T-cell (primary cell): ENCODE measurements at regions of chr11 and their contacts with region 1.

Region 1: GRCh38 chr11:83000377-83000776 is 71.3 kb downstream of the RAB30 start:
- DNase-seq: no peak
- ATAC-seq: no peak
- H3K4me3 ChIP-seq: no peak overlapping the region
- H3K4me3 Mint-ChIP-seq: no peak overlapping the region
- H3K27ac ChIP-seq: no peak overlapping the region
- H3K27ac Mint-ChIP-seq: no peak overlapping the region
- H3K4me1 ChIP-seq: peaks cover 4 to 8% of the 10 kb centered on the region in 2 experiments
- H3K4me1 Mint-ChIP-seq: peaks cover 30 to 55% (median 45%) of the 10 kb centered on the region in 3 donors
- H3K27me3 ChIP-seq: no peaks in the 10 kb centered on the region
- H3K27me3 Mint-ChIP-seq: no peaks in the 10 kb centered on the region

Region 2: GRCh38 chr11:82714346-82715174 is 285.8 kb before region 1 on chr11:
- CTCF ChIA-PET with region 1: no interaction called
- POLR2A ChIA-PET with region 1: no interaction called
- DNase-seq: no peak
- ATAC-seq: no peak
- H3K4me3 ChIP-seq: no peak overlapping the region
- H3K4me3 Mint-ChIP-seq: no peak overlapping the region
- H3K27ac ChIP-seq: no peak overlapping the region
- H3K27ac Mint-ChIP-seq: no peak overlapping the region
- H3K4me1 ChIP-seq: no peaks in the 10 kb centered on the region
- H3K4me1 Mint-ChIP-seq: no peaks in the 10 kb centered on the region
- H3K27me3 ChIP-seq: peaks cover 2 to 9% of the 10 kb centered on the region in 2 experiments
- H3K27me3 Mint-ChIP-seq: peaks cover 4 to 10% of the 10 kb centered on the region in 2 donors

Region 3: DNA sequence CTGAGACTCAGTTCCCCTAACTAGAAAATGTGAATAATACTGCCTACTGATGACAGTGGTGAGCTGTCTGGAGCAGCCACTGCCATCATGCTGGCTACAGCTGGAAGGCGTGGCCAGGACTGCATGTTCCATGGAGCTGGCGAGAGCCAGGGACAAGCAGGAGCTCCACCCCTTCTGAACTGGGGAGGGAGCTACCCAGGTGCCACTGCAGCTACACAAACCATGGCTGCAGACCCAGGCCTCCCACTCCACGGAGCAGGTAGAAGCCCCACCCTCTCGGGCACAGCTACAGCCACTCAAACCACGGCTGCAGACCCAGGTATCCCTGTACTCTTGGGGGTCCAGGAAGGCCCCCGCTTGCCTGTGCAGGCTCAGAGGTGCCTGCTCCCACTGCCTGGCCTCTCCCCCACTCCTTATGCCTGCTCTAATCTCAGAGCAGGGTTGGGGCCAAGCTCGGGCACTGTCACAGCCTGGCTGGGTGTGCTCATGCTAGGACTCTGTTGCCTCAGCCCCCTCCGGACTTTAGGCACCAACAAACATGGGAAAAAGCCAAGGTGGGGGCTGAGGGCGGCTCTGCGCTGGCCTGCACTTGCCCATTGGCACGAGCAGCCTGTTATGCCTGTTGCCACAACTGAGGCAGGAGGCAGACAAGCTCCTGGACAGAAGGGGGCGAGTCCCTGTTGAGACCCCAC is 19.7 kb after region 1 on chr11:
- CTCF ChIA-PET with region 1: interaction called in 1 of 2 experiments, 4 read pairs
- POLR2A ChIA-PET with region 1: interaction called in 1 of 2 experiments, 16 read pairs
- DNase-seq: no peak
- ATAC-seq: peak in 1 of 4 experiments; percentile 12
- H3K4me3 ChIP-seq: no peak overlapping the region
- H3K4me3 Mint-ChIP-seq: no peak overlapping the region
- H3K27ac ChIP-seq: no peak overlapping the region
- H3K27ac Mint-ChIP-seq: no peak overlapping the region
- H3K4me1 ChIP-seq: peaks cover 3 to 11% of the 10 kb centered on the region in 2 experiments
- H3K4me1 Mint-ChIP-seq: peaks cover 26 to 33% (median 31%) of the 10 kb centered on the region in 3 donors
- H3K27me3 ChIP-seq: no peaks in the 10 kb centered on the region
- H3K27me3 Mint-ChIP-seq: no peaks in the 10 kb centered on the region